Thyroid gland (tissue), 4 donors: ENCODE measurements at regions of chr22 and their contacts with region 1.

Region 1: DNA sequence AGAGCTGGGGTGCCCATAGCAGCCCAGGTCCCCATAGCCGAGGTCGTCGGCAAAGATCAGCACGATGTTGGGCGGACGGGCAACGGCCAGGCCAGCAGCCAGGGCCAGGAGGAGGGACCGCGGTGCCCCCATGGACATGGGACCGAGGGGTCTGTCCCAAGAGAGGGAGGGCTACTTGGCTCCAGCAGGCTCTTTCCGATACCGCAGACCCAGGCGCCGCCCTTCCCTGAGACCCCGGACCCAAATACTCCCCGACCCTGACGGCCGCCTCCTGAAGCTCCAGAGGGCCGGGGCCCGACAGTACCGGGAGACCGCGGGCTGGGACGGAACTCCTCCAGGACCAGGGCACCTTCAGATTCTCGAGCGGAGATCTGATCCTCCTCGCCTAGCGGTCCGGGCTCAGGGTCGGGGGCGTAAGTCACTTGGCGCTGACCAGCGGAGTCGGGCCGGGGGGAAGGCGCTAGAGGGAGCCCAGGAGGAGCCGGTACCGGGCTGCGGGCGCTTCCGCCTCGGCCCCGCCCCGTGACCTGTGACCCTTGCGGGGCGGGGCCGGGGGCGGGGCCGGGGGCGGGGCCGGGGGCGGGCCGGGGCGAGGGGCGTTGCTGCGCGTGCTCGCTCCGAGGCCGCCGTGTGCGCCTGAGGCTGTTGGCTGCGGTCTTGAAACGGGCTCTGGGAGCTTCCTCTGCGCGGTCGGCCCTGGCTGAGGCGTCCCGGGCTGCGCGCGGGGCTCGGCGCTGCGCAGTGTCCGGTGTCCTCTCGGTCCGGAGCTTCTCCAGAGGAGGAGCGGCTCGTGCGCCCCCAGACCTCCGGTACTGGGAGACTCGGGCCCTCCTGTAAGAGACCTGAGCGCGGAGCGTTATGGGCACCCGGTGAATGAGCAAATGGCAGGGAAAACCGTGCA is at the start of gene ARSA:
- DNase-seq: peak; percentile 78 to 79
- H3K4me3 ChIP-seq: peak within 1 kb of the TSS in 2 of 3 donors; percentile 62 to 75
- H3K27ac ChIP-seq: peak within 1 kb of the TSS; percentile 33 to 72 (median 58)
- H3K4me1 ChIP-seq: peaks cover 7 to 16% of the 10 kb centered on the region in 2 donors
- H3K27me3 ChIP-seq: no peaks in the 10 kb centered on the region
- CTCF ChIP-seq: peak in 3 of 6 experiments; percentile 24 to 42 (median 28)
- POLR2A ChIP-seq: peak in 1 of 2 donors; percentile 65
- total RNA-seq, gene ARSA: 30.9 to 73.5 (median 61.2) TPM

Region 2: GRCh38 chr22:50582562-50583293 is 45.2 kb before region 1 on chr22 and contains the start of gene CHKB:
- intact Hi-C with region 1: no loop called
- DNase-seq: peak; percentile 99 to 100
- H3K4me3 ChIP-seq: peak within 1 kb of the TSS; percentile 75 to 95 (median 80)
- H3K27ac ChIP-seq: peak within 1 kb of the TSS; percentile 95 to 98 (median 96)
- H3K4me1 ChIP-seq: peaks cover 13 to 35% of the 10 kb centered on the region in 2 donors
- H3K27me3 ChIP-seq: no peaks in the 10 kb centered on the region
- CTCF ChIP-seq: no peak
- POLR2A ChIP-seq: peak; percentile 64 to 94
- total RNA-seq, gene CHKB: 49.1 to 96.9 (median 67.8) TPM

Region 3: GRCh38 chr22:50674606-50675549 is 47.0 kb after region 1 on chr22:
- intact Hi-C with region 1: loop called (anchors 5 kb)
- DNase-seq: peak; percentile 79 to 86
- H3K4me3 ChIP-seq: peak overlapping the region in 1 of 3 donors; percentile 34
- H3K27ac ChIP-seq: no peak overlapping the region
- H3K4me1 ChIP-seq: peaks cover 8 to 25% of the 10 kb centered on the region in 2 donors
- H3K27me3 ChIP-seq: no peaks in the 10 kb centered on the region
- CTCF ChIP-seq: no peak
- POLR2A ChIP-seq: peak in 1 of 2 donors; percentile 15